Breast epithelium (tissue), 4 donors: ENCODE measurements at regions of chr20 and their contacts with region 1.

Region 1: DNA sequence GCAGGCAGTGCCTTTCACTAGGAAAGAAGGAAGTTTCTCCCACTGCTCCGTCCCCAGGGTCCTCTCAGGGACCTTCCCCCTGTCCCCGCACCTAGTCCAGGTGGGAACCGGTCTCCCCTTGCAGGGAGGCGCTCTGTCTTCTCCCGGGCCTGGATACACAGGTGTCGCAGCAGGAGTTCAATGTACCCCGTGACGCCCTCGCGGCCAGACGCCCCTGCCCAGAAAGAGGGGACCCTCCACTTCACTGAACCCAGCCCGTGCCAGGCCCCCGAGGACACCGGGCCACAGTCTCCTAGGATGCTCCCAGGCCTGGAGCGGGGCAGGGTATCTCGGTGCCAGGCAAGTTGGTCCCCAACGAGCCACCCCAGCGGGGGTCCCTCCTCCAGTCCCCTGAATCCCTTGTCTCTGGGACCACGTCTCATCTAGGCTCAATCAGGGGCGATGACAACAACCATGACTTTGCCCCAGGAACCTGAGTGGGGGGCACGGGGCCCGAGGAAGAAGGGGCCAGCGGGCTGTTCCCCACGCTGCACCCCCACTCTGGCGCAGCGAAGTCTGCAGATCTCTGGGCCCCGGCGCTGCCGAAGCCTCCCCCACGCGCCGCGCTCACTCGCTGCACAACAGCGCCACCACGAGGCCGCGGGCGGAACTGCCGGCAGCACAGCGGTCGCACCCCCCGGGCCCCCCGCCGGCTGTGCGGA is 103.0 kb downstream of the EDN3 start:
- DNase-seq: peak in 1 of 2 donors; percentile 25
- H3K4me3 ChIP-seq: peak overlapping the region in 2 of 3 donors; percentile 27 to 32
- H3K27ac ChIP-seq: no peak overlapping the region
- H3K4me1 ChIP-seq: peaks cover 0 to 5% of the 10 kb centered on the region in 2 donors
- H3K27me3 ChIP-seq: peaks cover 2 to 47% of the 10 kb centered on the region in 2 donors
- CTCF ChIP-seq: peak; percentile 83 to 94 (median 92)
- POLR2A ChIP-seq: no peak

Region 2: GRCh38 chr20:59087829-59088433 is 315.5 kb before region 1 on chr20:
- intact Hi-C with region 1: loop called (anchors 10 kb)
- DNase-seq: peak; percentile 77 to 84
- H3K4me3 ChIP-seq: no peak overlapping the region
- H3K27ac ChIP-seq: no peak overlapping the region
- H3K4me1 ChIP-seq: no peaks in the 10 kb centered on the region
- H3K27me3 ChIP-seq: no peaks in the 10 kb centered on the region
- CTCF ChIP-seq: peak; percentile 65 to 76 (median 70)
- POLR2A ChIP-seq: no peak